IMR-90 (cell line): ENCODE measurements at regions of chr17 and their contacts with region 1.

Region 1: GRCh38 chr17:80441133-80441578 is 26.2 kb downstream of the ENDOV start:
- DNase-seq: peak; percentile 36
- ATAC-seq: peak; percentile 86
- H3K4me3 ChIP-seq: no peak overlapping the region
- H3K27ac ChIP-seq: no peak overlapping the region
- H3K4me1 ChIP-seq: no peaks in the 10 kb centered on the region
- H3K27me3 ChIP-seq: peaks cover 11% of the 10 kb centered on the region; the same call in 1 of the 2 replicates
- CTCF ChIP-seq: 0 out of 2 replicates have a peak, but pooled peaks have one; percentile 2
- POLR2A ChIP-seq: no peak
- RAD21 ChIP-seq: peak; percentile 30; the same call in 1 of the 2 replicates

Region 2: DNA sequence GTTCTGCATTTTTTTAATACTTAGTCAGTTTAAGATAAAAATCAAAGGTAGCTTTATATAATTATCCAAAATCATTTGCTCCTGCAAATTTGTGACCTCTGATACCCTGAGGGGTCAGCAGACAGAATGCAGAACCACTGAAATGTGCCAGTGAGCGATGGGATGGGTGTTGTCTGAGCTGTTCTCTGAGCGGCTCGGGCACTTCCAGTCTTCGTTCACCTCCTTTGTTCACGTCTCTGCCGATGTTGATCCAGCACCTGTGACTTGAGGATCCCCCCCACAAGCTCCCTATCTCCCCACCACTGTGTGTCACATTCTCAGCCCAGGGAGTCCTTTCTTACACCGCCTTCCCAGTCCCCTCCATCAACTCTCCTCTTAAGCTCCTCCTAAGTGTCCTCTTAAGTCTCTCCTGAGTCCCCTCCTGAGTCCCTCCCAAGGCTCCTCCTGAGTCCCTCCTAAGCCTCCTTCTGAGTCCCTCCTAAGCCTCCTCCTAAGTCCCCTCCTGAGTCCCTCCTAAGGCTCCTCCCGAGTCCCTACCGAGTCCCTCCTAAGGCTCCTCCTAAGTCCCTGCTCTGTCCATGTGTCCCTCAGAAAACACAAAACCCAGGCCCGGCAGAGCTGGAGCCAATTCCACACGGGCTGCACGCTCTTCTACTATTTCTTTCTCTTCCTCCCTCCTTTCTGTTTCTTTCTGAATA is 133.0 kb before region 1 on chr17:
- CTCF ChIA-PET with region 1: no interaction called
- POLR2A ChIA-PET with region 1: interaction called, 17 read pairs
- dilution Hi-C with region 1: no loop called
- in situ Hi-C with region 1: no loop called
- intact Hi-C with region 1: no loop called
- DNase-seq: no peak
- ATAC-seq: no peak
- H3K4me3 ChIP-seq: no peak overlapping the region
- H3K27ac ChIP-seq: no peak overlapping the region
- H3K4me1 ChIP-seq: no peaks in the 10 kb centered on the region
- H3K27me3 ChIP-seq: no peaks in the 10 kb centered on the region
- CTCF ChIP-seq: no peak
- POLR2A ChIP-seq: no peak
- RAD21 ChIP-seq: no peak

Region 3: DNA sequence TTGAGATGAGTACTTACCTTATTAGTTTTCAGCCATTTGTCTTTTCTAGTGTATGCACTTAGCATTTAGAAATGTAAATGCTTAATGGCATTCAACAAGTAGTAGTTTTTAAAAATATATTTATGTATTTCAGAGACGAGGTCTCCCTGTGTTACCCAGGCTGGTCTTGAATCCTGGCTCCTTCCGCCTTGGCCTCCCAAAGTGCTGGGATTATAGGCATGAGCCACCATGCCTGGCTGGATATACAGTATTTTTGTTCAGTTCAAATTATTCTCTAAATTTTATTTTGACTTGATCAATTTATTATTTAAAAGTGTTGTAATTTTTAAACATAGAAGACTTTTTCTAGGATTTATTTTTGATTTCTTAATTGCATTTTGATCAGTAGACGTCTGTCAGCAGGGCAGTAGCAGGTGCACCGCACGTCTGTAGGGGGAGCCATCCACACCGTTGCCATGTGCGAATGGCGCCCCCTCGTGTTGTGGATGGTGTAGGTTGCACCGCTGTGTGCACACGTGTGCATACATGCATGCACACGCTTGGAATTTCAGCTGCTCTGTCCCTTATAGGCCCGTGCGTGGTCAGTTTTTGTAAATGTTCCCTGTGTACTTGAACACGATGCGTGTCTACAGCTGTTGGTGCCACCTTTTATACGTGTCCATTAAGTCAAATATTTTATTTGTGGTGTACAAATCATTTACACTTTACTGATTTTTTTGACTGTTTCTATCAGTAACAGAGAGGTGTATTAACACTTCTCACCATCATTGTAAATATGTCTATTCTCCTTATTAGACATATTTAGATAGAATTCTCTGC is 134.1 kb after region 1 on chr17:
- CTCF ChIA-PET with region 1: no interaction called
- POLR2A ChIA-PET with region 1: no interaction called
- dilution Hi-C with region 1: no loop called
- in situ Hi-C with region 1: no loop called
- intact Hi-C with region 1: no loop called
- DNase-seq: peak; percentile 89
- ATAC-seq: peak; percentile 98
- H3K4me3 ChIP-seq: no peak overlapping the region
- H3K27ac ChIP-seq: no peak overlapping the region
- H3K4me1 ChIP-seq: peaks cover 5% of the 10 kb centered on the region; the same call in 1 of the 2 replicates
- H3K27me3 ChIP-seq: no peaks in the 10 kb centered on the region
- CTCF ChIP-seq: peak; percentile 100; the same call in 1 of the 2 replicates
- POLR2A ChIP-seq: peak; percentile 69; the same call in 1 of the 2 replicates
- RAD21 ChIP-seq: peak; percentile 100